CD8-positive, alpha-beta T cell (primary cell): ENCODE measurements at regions of chr1 and their contacts with region 1.

Region 1: DNA sequence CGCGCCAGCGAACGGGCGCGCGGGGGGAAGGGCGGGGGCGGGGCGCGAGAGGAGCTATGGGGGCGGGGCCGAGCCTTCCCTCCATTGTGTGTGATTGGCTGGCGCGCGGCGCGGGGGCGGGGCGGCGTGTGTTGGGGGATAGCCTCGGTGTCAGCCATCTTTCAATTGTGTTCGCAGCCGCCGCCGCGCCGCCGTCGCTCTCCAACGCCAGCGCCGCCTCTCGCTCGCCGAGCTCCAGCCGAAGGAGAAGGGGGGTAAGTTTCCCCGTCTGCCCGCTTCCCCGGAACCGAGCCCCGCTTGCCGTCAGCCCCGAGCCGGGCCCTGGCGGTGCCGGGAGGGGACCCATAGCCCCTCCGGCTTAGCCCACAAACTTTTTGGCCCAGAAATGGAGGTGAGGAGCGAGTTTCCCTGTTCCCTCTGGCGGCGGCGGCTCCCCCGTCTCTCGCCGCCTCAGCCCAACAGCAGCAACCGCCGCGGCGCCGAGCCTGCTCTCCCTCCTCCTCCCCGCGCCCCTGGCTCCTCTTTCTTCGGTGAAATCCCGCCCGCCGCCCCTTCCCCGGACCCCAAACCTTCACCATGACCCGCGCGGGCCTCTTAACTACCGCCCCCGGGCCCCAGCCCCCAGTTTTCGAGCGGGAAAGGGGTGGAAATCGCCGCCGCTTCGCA is at the start of gene H3-3A:
- DNase-seq: peak; percentile 96 to 99 (median 98)
- ATAC-seq: peak; percentile 85
- H3K4me3 ChIP-seq: peak within 1 kb of the TSS; percentile 84 to 92
- H3K4me3 Mint-ChIP-seq: peak within 1 kb of the TSS; percentile 100
- H3K27ac ChIP-seq: peak within 1 kb of the TSS; percentile 90 to 91
- H3K27ac Mint-ChIP-seq: peak within 1 kb of the TSS; percentile 100
- H3K4me1 ChIP-seq: peaks cover 42% of the 10 kb centered on the region
- H3K4me1 Mint-ChIP-seq: peaks cover 49% of the 10 kb centered on the region
- H3K27me3 ChIP-seq: no peaks in the 10 kb centered on the region
- H3K27me3 Mint-ChIP-seq: no peaks in the 10 kb centered on the region
- CTCF ChIP-seq: no peak
- total RNA-seq, gene H3-3A: 439 to 447 TPM

Region 2: GRCh38 chr1:225467193-225468020 is 595.3 kb before region 1 on chr1:
- CTCF ChIA-PET with region 1: no interaction called
- POLR2A ChIA-PET with region 1: interaction called, 14 read pairs
- intact Hi-C with region 1: loop called in 1 of 2 experiments (anchors 1 kb)
- DNase-seq: peak; percentile 67 to 93 (median 86)
- ATAC-seq: peak; percentile 81
- H3K4me3 ChIP-seq: peak overlapping the region; percentile 60 to 86
- H3K4me3 Mint-ChIP-seq: peak overlapping the region; percentile 92
- H3K27ac ChIP-seq: peak overlapping the region; percentile 88 to 95
- H3K27ac Mint-ChIP-seq: peak overlapping the region; percentile 98
- H3K4me1 ChIP-seq: peaks cover 35% of the 10 kb centered on the region
- H3K4me1 Mint-ChIP-seq: peaks cover 43% of the 10 kb centered on the region
- H3K27me3 ChIP-seq: no peaks in the 10 kb centered on the region
- H3K27me3 Mint-ChIP-seq: no peaks in the 10 kb centered on the region
- CTCF ChIP-seq: no peak

Region 3: DNA sequence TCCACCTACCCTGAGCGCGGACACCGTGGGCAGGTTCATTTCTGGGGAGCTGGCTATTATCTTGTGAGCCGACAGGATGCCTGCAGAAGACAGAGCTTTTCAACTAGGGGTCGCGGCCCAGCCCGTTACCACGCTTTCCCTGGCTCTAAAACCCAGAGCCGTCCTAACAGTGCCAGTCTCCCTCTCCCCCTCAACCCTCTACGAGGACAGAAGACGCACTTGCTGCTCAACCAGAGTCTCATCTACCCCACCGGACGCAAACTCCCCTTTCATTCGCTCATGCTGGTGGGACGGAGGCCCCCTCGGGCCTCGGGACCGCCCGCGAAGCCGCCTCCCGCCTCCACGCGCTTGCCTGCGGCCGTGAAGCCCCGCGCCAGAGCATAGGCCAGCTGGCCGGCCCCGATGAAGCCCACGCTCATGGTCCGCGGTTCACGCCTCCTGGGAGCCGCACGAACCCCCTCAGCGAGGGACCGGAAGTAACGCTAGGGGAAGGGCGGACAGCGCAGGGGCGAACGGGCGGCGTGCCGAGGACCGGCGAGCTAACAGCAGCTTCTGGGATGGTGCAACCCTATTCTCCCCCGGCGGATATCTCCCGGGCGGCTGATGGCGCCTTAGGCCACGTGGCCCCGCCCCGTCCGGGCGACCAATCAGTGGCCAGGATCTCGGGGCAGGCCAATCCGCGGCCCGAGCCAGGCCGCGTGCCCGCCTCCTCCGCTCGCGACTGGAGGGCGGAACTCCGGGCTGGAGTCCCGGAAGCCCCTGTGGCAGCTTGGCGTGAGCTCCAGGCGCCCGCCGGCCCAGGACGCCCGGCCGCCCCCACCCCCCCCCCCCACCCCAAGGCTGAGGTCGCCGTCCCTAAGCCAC is 138.8 kb before region 1 on chr1 and contains the start of gene PYCR2:
- CTCF ChIA-PET with region 1: interaction called, 3 read pairs
- POLR2A ChIA-PET with region 1: interaction called, 3 read pairs
- intact Hi-C with region 1: loop called in 1 of 2 experiments (anchors 1 kb)
- DNase-seq: peak; percentile 90 to 98 (median 92)
- ATAC-seq: peak; percentile 98
- H3K4me3 ChIP-seq: peak within 1 kb of the TSS; percentile 75 to 79
- H3K4me3 Mint-ChIP-seq: peak within 1 kb of the TSS; percentile 94
- H3K27ac ChIP-seq: peak within 1 kb of the TSS; percentile 75 to 91
- H3K27ac Mint-ChIP-seq: peak within 1 kb of the TSS; percentile 93
- H3K4me1 ChIP-seq: peaks cover 75% of the 10 kb centered on the region
- H3K4me1 Mint-ChIP-seq: peaks cover 63% of the 10 kb centered on the region
- H3K27me3 ChIP-seq: no peaks in the 10 kb centered on the region
- H3K27me3 Mint-ChIP-seq: no peaks in the 10 kb centered on the region
- CTCF ChIP-seq: no peak
- total RNA-seq, gene PYCR2: 27.3 to 30.6 TPM

Region 4: DNA sequence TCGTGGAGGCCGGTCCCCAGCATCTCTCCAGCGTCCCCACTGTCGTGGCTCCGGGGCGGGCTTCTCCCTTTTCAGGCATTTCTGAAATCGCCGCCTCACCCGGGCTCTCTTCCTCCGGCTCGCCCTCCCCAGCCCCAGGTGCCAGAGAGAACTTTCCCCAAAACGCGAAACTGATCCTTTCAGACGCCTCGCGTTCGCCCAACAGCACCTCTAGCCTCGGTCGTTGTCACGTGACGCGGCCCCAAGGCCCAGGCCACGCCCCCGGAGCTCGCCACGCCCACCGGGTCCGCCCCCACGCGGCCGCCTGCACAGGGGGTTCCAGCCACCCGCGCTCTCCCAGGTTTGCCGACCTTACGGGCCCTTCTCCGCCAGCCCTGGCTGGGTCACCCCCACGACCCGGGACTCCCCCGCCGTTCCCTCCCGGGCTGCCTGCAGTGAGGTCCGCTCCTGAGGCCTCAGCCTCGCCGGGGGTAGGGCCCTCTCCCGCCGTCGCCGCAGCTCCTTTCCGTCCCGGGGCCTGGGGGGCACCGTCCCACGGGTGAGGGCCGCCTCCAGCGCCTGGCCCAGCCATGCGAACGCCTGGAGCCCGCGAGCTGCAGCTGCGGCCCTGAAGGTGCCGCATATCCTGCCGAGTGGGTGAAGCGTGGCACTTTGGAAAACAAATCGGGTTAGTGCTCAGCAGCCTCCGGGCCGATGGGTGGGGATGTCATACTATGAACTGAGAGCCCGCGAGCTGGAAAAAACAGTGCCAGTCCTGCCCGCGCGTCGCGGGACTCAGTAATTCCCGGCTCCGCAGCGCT is 20.8 kb after region 1 on chr1:
- CTCF ChIA-PET with region 1: interaction called, 30 read pairs
- POLR2A ChIA-PET with region 1: interaction called, 35 read pairs
- intact Hi-C with region 1: loop called (anchors 1 kb)
- DNase-seq: peak; percentile 80 to 97 (median 93)
- ATAC-seq: peak; percentile 97
- H3K4me3 ChIP-seq: peak overlapping the region; percentile 78 to 79
- H3K4me3 Mint-ChIP-seq: peak overlapping the region; percentile 90
- H3K27ac ChIP-seq: peak overlapping the region in 1 of 2 experiments; percentile 15
- H3K27ac Mint-ChIP-seq: peak overlapping the region; percentile 81
- H3K4me1 ChIP-seq: peaks cover 10% of the 10 kb centered on the region
- H3K4me1 Mint-ChIP-seq: peaks cover 11% of the 10 kb centered on the region
- H3K27me3 ChIP-seq: no peaks in the 10 kb centered on the region
- H3K27me3 Mint-ChIP-seq: no peaks in the 10 kb centered on the region
- CTCF ChIP-seq: no peak

Region 5: DNA sequence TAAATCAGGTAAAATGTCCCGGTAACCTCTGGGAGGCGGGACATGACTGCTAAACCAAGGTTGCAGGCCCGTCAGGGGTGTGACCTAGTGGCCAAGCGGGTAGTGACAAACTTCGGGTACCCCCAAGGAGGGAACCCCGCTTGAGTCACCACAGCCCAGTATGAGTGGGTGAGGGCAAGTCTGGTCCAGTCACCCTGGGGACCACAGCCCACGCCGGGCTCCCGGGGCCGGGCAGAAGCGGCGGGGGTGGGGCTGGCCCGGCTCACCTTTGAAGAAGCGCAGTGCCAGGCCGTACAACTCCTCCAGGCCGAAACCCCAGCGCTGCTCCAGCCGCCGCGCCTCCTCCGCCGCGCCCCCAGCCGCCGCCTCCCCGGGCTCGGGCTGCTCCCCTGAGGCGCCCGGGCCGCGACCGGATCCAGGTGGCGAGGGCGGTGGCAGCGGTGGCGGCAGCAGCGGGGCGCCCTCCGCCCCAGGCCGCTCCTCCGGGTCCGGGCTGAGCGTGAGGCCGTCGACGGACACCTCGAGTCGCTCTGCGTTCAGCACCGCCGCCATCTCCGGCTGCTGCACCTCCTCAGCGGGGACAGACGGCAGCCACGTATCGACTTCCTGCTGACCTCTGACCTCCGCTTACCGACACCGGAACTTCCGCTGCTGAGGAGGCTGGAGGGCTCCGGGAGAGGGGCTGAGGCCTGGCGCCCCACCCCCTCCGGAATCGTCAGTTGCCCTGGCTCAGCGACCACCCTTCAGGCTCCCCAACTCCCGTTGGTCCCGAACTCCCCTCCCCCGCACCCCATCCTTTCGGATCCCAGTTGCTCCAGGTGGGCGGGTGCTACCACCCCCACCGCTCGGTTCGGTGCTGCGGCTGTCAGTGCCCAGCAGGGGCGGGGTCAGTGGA is 123.7 kb after region 1 on chr1 and contains the start of gene ACBD3:
- CTCF ChIA-PET with region 1: interaction called, 3 read pairs
- POLR2A ChIA-PET with region 1: interaction called, 5 read pairs
- intact Hi-C with region 1: loop called (anchors 1 to 5 kb)
- DNase-seq: peak; percentile 67 to 95 (median 87)
- ATAC-seq: peak; percentile 97
- H3K4me3 ChIP-seq: peak within 1 kb of the TSS; percentile 82 to 90
- H3K4me3 Mint-ChIP-seq: peak within 1 kb of the TSS; percentile 92
- H3K27ac ChIP-seq: peak within 1 kb of the TSS; percentile 72 to 88
- H3K27ac Mint-ChIP-seq: peak within 1 kb of the TSS; percentile 95
- H3K4me1 ChIP-seq: peaks cover 41% of the 10 kb centered on the region
- H3K4me1 Mint-ChIP-seq: peaks cover 40% of the 10 kb centered on the region
- H3K27me3 ChIP-seq: no peaks in the 10 kb centered on the region
- H3K27me3 Mint-ChIP-seq: no peaks in the 10 kb centered on the region
- CTCF ChIP-seq: no peak
- total RNA-seq, gene ACBD3: 40.9 to 41.4 TPM